ENCODE measurements at regions of chr9 and their contacts with region 1.

Region 1: GRCh38 chr9:73200694-73201452 is 49.2 kb downstream of the ANXA1 start:
- DNase-seq: no peak
- ATAC-seq: no peak
- H3K4me3 ChIP-seq: no peak overlapping the region
- H3K27ac ChIP-seq: no peak overlapping the region
- H3K4me1 ChIP-seq: no peaks in the 10 kb centered on the region
- H3K27me3 ChIP-seq: no peaks in the 10 kb centered on the region

Region 2: DNA sequence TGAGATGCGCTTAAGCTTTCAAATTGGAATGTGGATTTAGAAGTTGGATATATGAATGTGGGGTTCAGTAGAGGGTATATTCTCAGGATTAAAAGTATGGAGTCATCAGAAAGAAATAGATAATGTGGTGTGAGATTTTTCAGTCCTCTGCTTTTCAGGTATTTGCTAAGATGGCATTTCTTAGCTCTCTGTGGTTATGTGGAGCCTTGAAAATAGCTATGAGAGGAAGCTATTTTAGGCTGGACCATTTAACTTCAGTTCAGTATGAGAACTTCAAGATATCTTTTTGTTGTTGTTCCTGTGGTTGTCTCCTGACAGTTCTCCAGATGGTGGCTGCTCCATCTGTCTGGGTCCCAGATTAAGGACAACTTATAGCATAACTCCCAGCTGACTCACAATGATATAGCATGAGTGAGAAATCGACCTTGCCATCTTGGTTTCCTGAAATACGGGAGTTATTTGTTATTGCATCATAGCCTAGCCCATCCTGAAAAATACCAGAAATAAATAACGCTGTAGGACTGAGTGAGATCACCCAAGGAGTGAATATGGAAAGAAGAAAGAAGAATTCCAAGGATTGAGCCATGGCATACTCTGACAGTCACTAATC is 412.3 kb after region 1 on chr9:
- intact Hi-C with region 1: no loop called
- DNase-seq: no peak
- ATAC-seq: no peak
- H3K4me3 ChIP-seq: no peak overlapping the region
- H3K27ac ChIP-seq: no peak overlapping the region
- H3K4me1 ChIP-seq: no peaks in the 10 kb centered on the region
- H3K27me3 ChIP-seq: no peaks in the 10 kb centered on the region

Region 3: GRCh38 chr9:74742792-74743730 is 1542.2 kb after region 1 on chr9:
- intact Hi-C with region 1: loop called in 1 of 4 experiments (anchors 5 kb)
- DNase-seq: no peak
- ATAC-seq: no peak
- H3K4me3 ChIP-seq: peak overlapping the region; percentile 10
- H3K27ac ChIP-seq: no peak overlapping the region
- H3K4me1 ChIP-seq: no peaks in the 10 kb centered on the region
- H3K27me3 ChIP-seq: no peaks in the 10 kb centered on the region

Measured in right cardiac atrium (tissue), 5 donors.